ENCODE measurements at regions of chr3 and their contacts with region 1.

Region 1: GRCh38 chr3:185983495-185984141 is 45.8 kb upstream of the TRA2B start:
- DNase-seq: peak; percentile 45 to 65 (median 56)
- H3K4me3 ChIP-seq: no peak overlapping the region
- H3K4me3 Mint-ChIP-seq: peak overlapping the region in 1 of 2 donors; percentile 73
- H3K27ac ChIP-seq: no peak overlapping the region
- H3K27ac Mint-ChIP-seq: peak overlapping the region in 1 of 7 donors; percentile 21
- H3K4me1 ChIP-seq: peaks cover 3 to 7% of the 10 kb centered on the region in 2 donors
- H3K4me1 Mint-ChIP-seq: peaks cover 15% of the 10 kb centered on the region
- H3K27me3 ChIP-seq: no peaks in the 10 kb centered on the region
- H3K27me3 Mint-ChIP-seq: peaks cover 5 to 20% (median 5%) of the 10 kb centered on the region in 3 donors
- CTCF ChIP-seq: peak; percentile 91

Region 2: GRCh38 chr3:185797993-185798830 is 185.4 kb before region 1 on chr3:
- intact Hi-C with region 1: no loop called
- DNase-seq: no peak
- H3K4me3 ChIP-seq: no peak overlapping the region
- H3K4me3 Mint-ChIP-seq: no peak overlapping the region
- H3K27ac ChIP-seq: no peak overlapping the region
- H3K27ac Mint-ChIP-seq: peak overlapping the region in 2 of 7 donors; percentile 4 to 35
- H3K4me1 ChIP-seq: peaks cover 43 to 50% of the 10 kb centered on the region in 2 donors
- H3K4me1 Mint-ChIP-seq: peaks cover 63% of the 10 kb centered on the region
- H3K27me3 ChIP-seq: no peaks in the 10 kb centered on the region
- H3K27me3 Mint-ChIP-seq: no peaks in the 10 kb centered on the region
- CTCF ChIP-seq: no peak

Region 3: GRCh38 chr3:186241910-186242821 is 258.5 kb after region 1 on chr3:
- intact Hi-C with region 1: loop called in 1 of 2 experiments (anchors 5 kb)
- DNase-seq: peak; percentile 44 to 73 (median 57)
- H3K4me3 ChIP-seq: peak overlapping the region in 1 of 3 experiments; percentile 61
- H3K4me3 Mint-ChIP-seq: peak overlapping the region; percentile 24 to 46
- H3K27ac ChIP-seq: peak overlapping the region in 1 of 2 donors; percentile 32
- H3K27ac Mint-ChIP-seq: peak overlapping the region in 4 of 7 donors; percentile 24 to 83 (median 46)
- H3K4me1 ChIP-seq: peaks cover 3 to 7% of the 10 kb centered on the region in 2 donors
- H3K4me1 Mint-ChIP-seq: peaks cover 11% of the 10 kb centered on the region
- H3K27me3 ChIP-seq: no peaks in the 10 kb centered on the region
- H3K27me3 Mint-ChIP-seq: no peaks in the 10 kb centered on the region
- CTCF ChIP-seq: peak; percentile 13

Region 4: GRCh38 chr3:186259612-186260383 is 276.2 kb after region 1 on chr3:
- intact Hi-C with region 1: loop called (anchors 5 to 10 kb)
- DNase-seq: peak; percentile 15 to 34 (median 18)
- H3K4me3 ChIP-seq: no peak overlapping the region
- H3K4me3 Mint-ChIP-seq: no peak overlapping the region
- H3K27ac ChIP-seq: no peak overlapping the region
- H3K27ac Mint-ChIP-seq: peak overlapping the region in 4 of 7 donors; percentile 31 to 65 (median 52)
- H3K4me1 ChIP-seq: peaks cover 8 to 9% of the 10 kb centered on the region in 2 donors
- H3K4me1 Mint-ChIP-seq: peaks cover 20% of the 10 kb centered on the region
- H3K27me3 ChIP-seq: no peaks in the 10 kb centered on the region
- H3K27me3 Mint-ChIP-seq: no peaks in the 10 kb centered on the region
- CTCF ChIP-seq: peak; percentile 74

Region 5: GRCh38 chr3:186540221-186540834 is 556.7 kb after region 1 on chr3:
- intact Hi-C with region 1: loop called (anchors 5 kb)
- DNase-seq: peak; percentile 56 to 71 (median 70)
- H3K4me3 ChIP-seq: peak overlapping the region in 2 of 3 experiments; percentile 12 to 39
- H3K4me3 Mint-ChIP-seq: peak overlapping the region in 1 of 2 donors; percentile 67
- H3K27ac ChIP-seq: no peak overlapping the region
- H3K27ac Mint-ChIP-seq: no peak overlapping the region
- H3K4me1 ChIP-seq: peaks cover 3 to 5% of the 10 kb centered on the region in 2 donors
- H3K4me1 Mint-ChIP-seq: peaks cover 8% of the 10 kb centered on the region
- H3K27me3 ChIP-seq: no peaks in the 10 kb centered on the region
- H3K27me3 Mint-ChIP-seq: no peaks in the 10 kb centered on the region
- CTCF ChIP-seq: peak; percentile 83

Region 6: GRCh38 chr3:186617038-186617946 is 633.7 kb after region 1 on chr3:
- intact Hi-C with region 1: loop called (anchors 5 to 10 kb)
- DNase-seq: peak; percentile 63 to 78 (median 67)
- H3K4me3 ChIP-seq: no peak overlapping the region
- H3K4me3 Mint-ChIP-seq: peak overlapping the region; percentile 6 to 85
- H3K27ac ChIP-seq: no peak overlapping the region
- H3K27ac Mint-ChIP-seq: no peak overlapping the region
- H3K4me1 ChIP-seq: peaks cover 6 to 10% of the 10 kb centered on the region in 2 donors
- H3K4me1 Mint-ChIP-seq: peaks cover 18% of the 10 kb centered on the region
- H3K27me3 ChIP-seq: peaks cover 13 to 34% of the 10 kb centered on the region in 2 donors
- H3K27me3 Mint-ChIP-seq: peaks cover 30 to 37% (median 34%) of the 10 kb centered on the region in 3 donors
- CTCF ChIP-seq: peak; percentile 90